Heart left ventricle (tissue), 16 donors: ENCODE measurements at regions of chr17 and their contacts with region 1.

Region 1: DNA sequence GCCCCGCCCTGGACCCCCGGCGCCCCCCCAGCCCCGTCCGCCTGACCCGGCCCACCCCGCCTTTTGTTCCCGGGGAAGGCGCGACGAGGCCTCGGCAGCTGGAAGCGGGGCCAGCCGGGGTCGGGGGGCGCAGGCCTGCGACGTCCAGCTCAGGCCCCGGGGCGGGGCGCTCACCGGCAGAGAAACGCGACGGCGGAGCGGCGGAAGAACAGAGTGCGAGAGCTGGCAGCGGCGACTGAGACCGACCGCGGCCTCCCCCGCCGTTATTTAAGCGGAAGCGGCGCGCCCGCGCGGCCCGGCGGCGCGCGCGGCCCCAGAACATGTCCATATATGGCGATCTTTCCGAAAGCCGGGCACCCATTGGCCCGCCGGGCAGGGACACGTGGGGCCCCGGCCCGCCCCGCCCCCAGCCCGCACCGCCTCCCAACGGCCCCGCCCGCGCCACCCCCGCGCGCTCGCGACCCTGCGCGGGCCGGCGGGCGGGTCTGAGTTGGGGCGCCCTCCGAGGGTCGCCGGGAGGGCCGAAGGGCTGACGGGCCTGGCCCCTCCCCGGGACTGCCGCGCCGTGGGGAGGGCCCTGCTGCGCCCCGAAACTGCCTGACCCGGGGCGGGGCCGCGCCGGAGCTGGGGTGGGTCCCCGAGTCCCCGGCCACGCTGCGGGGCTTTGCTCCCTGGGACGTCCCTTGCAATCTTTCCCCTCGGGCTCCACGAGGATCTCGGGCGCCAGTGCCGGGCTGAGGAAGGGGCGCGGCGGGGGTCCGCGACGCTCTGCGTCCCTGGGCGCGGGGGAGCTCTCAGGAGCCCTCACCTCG is at the start of gene ACTG1:
- DNase-seq: peak; percentile 94 to 96 (median 95)
- ATAC-seq: peak; percentile 61 to 77 (median 66)
- H3K4me3 ChIP-seq: peak within 1 kb of the TSS; percentile 81 to 99 (median 94)
- H3K27ac ChIP-seq: peak within 1 kb of the TSS; percentile 96 to 100 (median 100)
- H3K4me1 ChIP-seq: peaks cover 6 to 58% (median 39%) of the 10 kb centered on the region in 12 donors
- H3K27me3 ChIP-seq: no peaks in the 10 kb centered on the region
- CTCF ChIP-seq: no peak
- POLR2A ChIP-seq: peak; percentile 83 to 94
- total RNA-seq, gene ACTG1: 335 to 1,653 (median 423) TPM

Region 2: GRCh38 chr17:81309070-81309905 is 203.5 kb before region 1 on chr17:
- intact Hi-C with region 1: no loop called
- DNase-seq: peak; percentile 90 to 95 (median 94)
- ATAC-seq: peak; percentile 91 to 95 (median 93)
- H3K4me3 ChIP-seq: peak overlapping the region; percentile 5 to 62 (median 50)
- H3K27ac ChIP-seq: peak overlapping the region; percentile 58 to 85 (median 78)
- H3K4me1 ChIP-seq: peaks cover 4 to 33% (median 17%) of the 10 kb centered on the region in 12 donors
- H3K27me3 ChIP-seq: no peaks in the 10 kb centered on the region
- CTCF ChIP-seq: peak in 11 of 12 donors; percentile 36 to 65 (median 48)
- POLR2A ChIP-seq: peak in 1 of 2 donors; percentile 67

Region 3: DNA sequence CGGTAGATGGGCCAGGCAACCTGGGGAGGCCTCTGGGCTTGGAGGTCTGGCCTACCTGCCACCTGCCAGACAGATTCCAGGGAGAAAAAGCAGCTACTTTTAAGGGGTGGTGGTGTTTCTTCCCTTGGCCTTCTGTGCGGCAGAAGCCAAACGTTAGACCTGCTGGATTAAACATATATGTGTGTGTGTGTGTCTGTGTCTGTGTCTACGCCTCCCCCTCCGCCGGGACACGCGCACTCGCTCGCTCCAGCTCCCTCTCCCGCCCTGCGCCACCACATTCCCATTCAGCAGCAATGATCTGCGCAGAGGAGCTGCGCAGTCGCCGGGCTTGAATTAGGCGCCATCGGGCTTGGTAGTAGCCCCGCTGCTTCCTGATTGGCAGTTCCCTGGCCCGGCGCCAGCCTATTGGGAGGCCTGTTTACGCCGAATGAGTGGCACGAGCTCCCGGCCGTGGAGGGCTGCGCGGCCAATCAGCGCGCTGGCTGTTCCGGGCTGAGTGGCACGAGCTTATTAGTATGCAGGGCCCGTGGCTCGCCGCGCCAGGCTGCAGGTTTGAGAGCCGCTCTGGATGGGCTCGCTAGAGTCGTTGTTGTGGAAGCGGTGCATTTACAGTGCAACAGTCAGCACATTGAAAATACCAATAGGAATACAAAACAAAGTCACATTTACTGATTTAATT is 117.7 kb before region 1 on chr17 and contains the start of gene BAHCC1:
- intact Hi-C with region 1: loop called in 4 of 10 experiments (anchors 2 to 10 kb)
- DNase-seq: peak; percentile 100
- ATAC-seq: peak; percentile 80 to 89 (median 87)
- H3K4me3 ChIP-seq: peak within 1 kb of the TSS; percentile 57 to 95 (median 80)
- H3K27ac ChIP-seq: peak within 1 kb of the TSS; percentile 91 to 100 (median 97)
- H3K4me1 ChIP-seq: peaks cover 6 to 67% (median 30%) of the 10 kb centered on the region in 12 donors
- H3K27me3 ChIP-seq: peaks cover 0 to 14% (median 0%) of the 10 kb centered on the region in 9 donors
- CTCF ChIP-seq: no peak
- POLR2A ChIP-seq: peak; percentile 55 to 98
- total RNA-seq, gene BAHCC1: 6.0 to 19.6 (median 9.3) TPM

Region 4: GRCh38 chr17:81553018-81553615 is 40.4 kb after region 1 on chr17:
- intact Hi-C with region 1: loop called in 5 of 10 experiments (anchors 5 kb)
- DNase-seq: peak; percentile 65 to 78 (median 71)
- ATAC-seq: peak; percentile 14 to 62 (median 44)
- H3K4me3 ChIP-seq: peak overlapping the region; percentile 82 to 100 (median 92)
- H3K27ac ChIP-seq: peak overlapping the region; percentile 77 to 95 (median 90)
- H3K4me1 ChIP-seq: peaks cover 0 to 65% (median 39%) of the 10 kb centered on the region in 12 donors
- H3K27me3 ChIP-seq: no peaks in the 10 kb centered on the region
- CTCF ChIP-seq: peak in 1 of 12 donors; percentile 11
- POLR2A ChIP-seq: no peak